Caco-2 (cell line): ENCODE measurements at regions of chr13 and their contacts with region 1.

Region 1: GRCh38 chr13:100573121-100573520 is 15.5 kb downstream of the GGACT start:
- DNase-seq: peak; percentile 79 to 82
- H3K4me3 ChIP-seq: no peak overlapping the region
- H3K4me3 Mint-ChIP-seq: no peak overlapping the region
- H3K27ac Mint-ChIP-seq: no peak overlapping the region
- H3K4me1 ChIP-seq: no peaks in the 10 kb centered on the region
- H3K4me1 Mint-ChIP-seq: no peaks in the 10 kb centered on the region
- H3K27me3 ChIP-seq: no peaks in the 10 kb centered on the region
- H3K27me3 Mint-ChIP-seq: no peaks in the 10 kb centered on the region
- CTCF ChIP-seq: peak; percentile 67 to 86

Region 2: GRCh38 chr13:99832347-99832746 is 740.8 kb before region 1 on chr13:
- CTCF ChIA-PET with region 1: interaction called, 11 read pairs
- POLR2A ChIA-PET with region 1: no interaction called
- intact Hi-C with region 1: no loop called
- DNase-seq: no peak
- H3K4me3 ChIP-seq: no peak overlapping the region
- H3K4me3 Mint-ChIP-seq: no peak overlapping the region
- H3K27ac Mint-ChIP-seq: no peak overlapping the region
- H3K4me1 ChIP-seq: no peaks in the 10 kb centered on the region
- H3K4me1 Mint-ChIP-seq: no peaks in the 10 kb centered on the region
- H3K27me3 ChIP-seq: no peaks in the 10 kb centered on the region
- H3K27me3 Mint-ChIP-seq: peaks cover 3% of the 10 kb centered on the region
- CTCF ChIP-seq: no peak

Region 3: DNA sequence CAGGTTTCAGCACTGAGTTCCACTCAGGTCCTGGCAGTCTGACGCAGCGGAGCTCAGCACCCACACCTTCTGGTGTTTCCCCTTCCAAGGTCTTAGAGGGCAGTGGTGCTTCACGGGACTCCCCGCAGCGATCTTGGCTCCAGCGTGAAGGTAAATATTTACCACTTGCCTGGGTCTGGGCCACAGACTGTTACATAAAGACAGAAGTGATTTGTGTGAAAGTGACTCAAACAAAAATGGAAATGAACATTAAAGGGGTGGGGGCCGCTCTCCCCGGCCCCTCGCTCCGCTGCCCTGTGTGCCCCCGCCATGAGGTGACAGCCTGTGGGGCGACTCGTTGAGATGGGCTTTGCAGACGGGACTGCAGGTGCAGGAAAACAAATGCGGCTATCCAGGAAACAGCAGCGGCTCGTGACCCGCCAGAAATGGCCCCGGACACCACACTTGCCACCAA is 39.5 kb before region 1 on chr13:
- CTCF ChIA-PET with region 1: no interaction called
- POLR2A ChIA-PET with region 1: no interaction called
- intact Hi-C with region 1: no loop called
- DNase-seq: no peak
- H3K4me3 ChIP-seq: no peak overlapping the region
- H3K4me3 Mint-ChIP-seq: no peak overlapping the region
- H3K27ac Mint-ChIP-seq: no peak overlapping the region
- H3K4me1 ChIP-seq: no peaks in the 10 kb centered on the region
- H3K4me1 Mint-ChIP-seq: no peaks in the 10 kb centered on the region
- H3K27me3 ChIP-seq: no peaks in the 10 kb centered on the region
- H3K27me3 Mint-ChIP-seq: no peaks in the 10 kb centered on the region
- CTCF ChIP-seq: no peak

Region 4: GRCh38 chr13:100588331-100589177 is 15.4 kb after region 1 on chr13 and contains the start of gene GGACT:
- CTCF ChIA-PET with region 1: interaction called, 11 read pairs
- POLR2A ChIA-PET with region 1: no interaction called
- intact Hi-C with region 1: loop called (anchors 2 kb)
- DNase-seq: peak; percentile 79 to 92
- H3K4me3 ChIP-seq: peak within 1 kb of the TSS; percentile 72
- H3K4me3 Mint-ChIP-seq: peak within 1 kb of the TSS; percentile 83
- H3K27ac Mint-ChIP-seq: peak within 1 kb of the TSS; percentile 85
- H3K4me1 ChIP-seq: 0 out of 2 replicates have a peak, but pooled peaks cover 10% of the 10 kb centered on the region
- H3K4me1 Mint-ChIP-seq: peaks cover 7% of the 10 kb centered on the region
- H3K27me3 ChIP-seq: no peaks in the 10 kb centered on the region
- H3K27me3 Mint-ChIP-seq: no peaks in the 10 kb centered on the region
- CTCF ChIP-seq: peak; percentile 45 to 75
- total RNA-seq, gene GGACT: 3.5 and 3.6 TPM in 2 replicates

Region 5: GRCh38 chr13:100883453-100883852 is 310.3 kb after region 1 on chr13:
- CTCF ChIA-PET with region 1: no interaction called
- POLR2A ChIA-PET with region 1: no interaction called
- intact Hi-C with region 1: loop called (anchors 1 kb)
- DNase-seq: peak in 1 of 2 experiments; percentile 8
- H3K4me3 ChIP-seq: no peak overlapping the region
- H3K4me3 Mint-ChIP-seq: no peak overlapping the region
- H3K27ac Mint-ChIP-seq: no peak overlapping the region
- H3K4me1 ChIP-seq: no peaks in the 10 kb centered on the region
- H3K4me1 Mint-ChIP-seq: no peaks in the 10 kb centered on the region
- H3K27me3 ChIP-seq: no peaks in the 10 kb centered on the region
- H3K27me3 Mint-ChIP-seq: no peaks in the 10 kb centered on the region
- CTCF ChIP-seq: peak; percentile 19 to 44

Region 6: DNA sequence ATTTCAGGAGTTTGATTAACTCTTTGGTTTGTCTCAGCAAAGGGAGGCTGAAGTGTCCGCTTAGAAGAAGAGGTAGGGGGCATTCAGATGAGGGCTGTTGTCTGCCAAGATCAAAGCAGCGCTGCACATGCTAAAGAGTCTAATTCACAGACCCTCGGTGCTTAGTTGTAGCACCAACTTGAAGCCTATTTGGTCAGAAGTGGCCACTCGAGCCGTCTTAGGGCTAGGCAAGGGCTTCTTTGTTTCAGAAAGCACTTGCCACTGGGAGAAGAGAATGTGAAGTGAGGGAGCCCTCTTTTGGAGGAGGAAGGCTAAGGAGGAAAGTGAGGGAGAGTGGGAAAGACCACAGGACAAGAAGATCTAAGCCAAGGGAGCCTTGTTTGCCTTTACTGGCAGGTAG is 414.8 kb after region 1 on chr13:
- CTCF ChIA-PET with region 1: no interaction called
- POLR2A ChIA-PET with region 1: no interaction called
- intact Hi-C with region 1: loop called (anchors 1 kb)
- DNase-seq: peak in 1 of 2 experiments; percentile 12
- H3K4me3 ChIP-seq: no peak overlapping the region
- H3K4me3 Mint-ChIP-seq: no peak overlapping the region
- H3K27ac Mint-ChIP-seq: no peak overlapping the region
- H3K4me1 ChIP-seq: no peaks in the 10 kb centered on the region
- H3K4me1 Mint-ChIP-seq: no peaks in the 10 kb centered on the region
- H3K27me3 ChIP-seq: no peaks in the 10 kb centered on the region
- H3K27me3 Mint-ChIP-seq: no peaks in the 10 kb centered on the region
- CTCF ChIP-seq: peak in 1 of 2 experiments; percentile 4

Region 7: DNA sequence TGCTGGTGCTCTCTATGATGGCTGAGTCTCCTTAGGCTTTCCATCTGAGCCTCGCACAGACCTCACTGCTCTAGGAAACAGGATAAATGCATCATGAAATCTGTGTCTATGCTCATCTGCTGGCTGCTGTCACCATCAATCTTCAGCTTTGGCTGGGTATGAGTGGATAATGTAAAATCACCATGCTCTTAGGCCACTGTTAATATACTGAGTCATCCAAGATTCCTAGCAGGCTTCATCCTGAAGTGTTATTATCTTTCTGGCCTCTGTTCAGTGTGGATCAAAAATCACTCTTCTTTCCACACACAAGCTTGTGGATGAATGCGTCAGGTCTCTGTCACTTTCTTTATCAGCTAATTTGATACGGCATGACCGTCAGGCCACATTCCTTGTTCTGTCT is 525.8 kb after region 1 on chr13:
- CTCF ChIA-PET with region 1: no interaction called
- POLR2A ChIA-PET with region 1: no interaction called
- intact Hi-C with region 1: loop called (anchors 1 kb)
- DNase-seq: no peak
- H3K4me3 ChIP-seq: no peak overlapping the region
- H3K4me3 Mint-ChIP-seq: no peak overlapping the region
- H3K27ac Mint-ChIP-seq: no peak overlapping the region
- H3K4me1 ChIP-seq: no peaks in the 10 kb centered on the region
- H3K4me1 Mint-ChIP-seq: no peaks in the 10 kb centered on the region
- H3K27me3 ChIP-seq: no peaks in the 10 kb centered on the region
- H3K27me3 Mint-ChIP-seq: peaks cover 7% of the 10 kb centered on the region
- CTCF ChIP-seq: no peak

Region 8: GRCh38 chr13:101127741-101128353 is 554.7 kb after region 1 on chr13:
- CTCF ChIA-PET with region 1: interaction called, 12 read pairs
- POLR2A ChIA-PET with region 1: no interaction called
- intact Hi-C with region 1: loop called (anchors 1 kb)
- DNase-seq: peak in 1 of 2 experiments; percentile 23
- H3K4me3 ChIP-seq: no peak overlapping the region
- H3K4me3 Mint-ChIP-seq: no peak overlapping the region
- H3K27ac Mint-ChIP-seq: no peak overlapping the region
- H3K4me1 ChIP-seq: no peaks in the 10 kb centered on the region
- H3K4me1 Mint-ChIP-seq: no peaks in the 10 kb centered on the region
- H3K27me3 ChIP-seq: no peaks in the 10 kb centered on the region; the same call in 1 of the 2 replicates
- H3K27me3 Mint-ChIP-seq: peaks cover 19% of the 10 kb centered on the region
- CTCF ChIP-seq: peak; percentile 56 to 85